HEK293 (cell line): ENCODE measurements at regions of chr22 and their contacts with region 1.

Region 1: GRCh38 chr22:33579448-33580093 is 340.7 kb downstream of the LARGE1 start:
- H3K4me3 ChIP-seq: no peak overlapping the region
- H3K27ac ChIP-seq: no peak overlapping the region
- H3K4me1 ChIP-seq: peaks cover 9% of the 10 kb centered on the region
- CTCF ChIP-seq: peak; percentile 66

Region 2: DNA sequence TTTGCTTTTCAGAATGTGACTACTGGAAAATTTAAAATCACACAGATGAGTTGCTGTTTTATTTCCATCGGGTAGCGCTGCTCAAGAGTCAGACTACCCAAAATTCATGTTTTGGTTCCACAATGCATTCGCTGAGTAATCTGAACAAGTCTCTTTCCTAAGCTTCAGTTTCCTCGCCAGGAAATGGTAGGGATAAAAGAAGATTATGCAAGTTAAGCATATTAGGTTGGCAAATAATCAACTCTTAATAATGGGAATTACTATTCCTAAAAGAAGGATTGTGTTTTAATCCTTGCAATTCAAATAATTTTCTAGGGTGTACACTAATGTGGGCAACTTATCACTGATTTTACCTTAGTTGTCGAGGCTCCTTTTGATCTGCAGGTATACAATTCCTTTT is 14.2 kb after region 1 on chr22:
- CTCF ChIA-PET with region 1: interaction called, 12 read pairs
- POLR2A ChIA-PET with region 1: no interaction called
- H3K4me3 ChIP-seq: no peak overlapping the region
- H3K27ac ChIP-seq: no peak overlapping the region
- H3K4me1 ChIP-seq: no peaks in the 10 kb centered on the region
- CTCF ChIP-seq: no peak